Caco-2 (cell line): ENCODE measurements at regions of chr6 and their contacts with region 1.

Region 1: GRCh38 chr6:27146706-27147505 is 100.6 kb upstream of the PRSS16 start:
- DNase-seq: peak; percentile 89 to 93
- H3K4me3 ChIP-seq: peak overlapping the region; percentile 69
- H3K4me3 Mint-ChIP-seq: no peak overlapping the region
- H3K27ac Mint-ChIP-seq: no peak overlapping the region
- H3K4me1 ChIP-seq: no peaks in the 10 kb centered on the region
- H3K4me1 Mint-ChIP-seq: peaks cover 8% of the 10 kb centered on the region
- H3K27me3 ChIP-seq: no peaks in the 10 kb centered on the region
- H3K27me3 Mint-ChIP-seq: no peaks in the 10 kb centered on the region
- CTCF ChIP-seq: no peak

Region 2: DNA sequence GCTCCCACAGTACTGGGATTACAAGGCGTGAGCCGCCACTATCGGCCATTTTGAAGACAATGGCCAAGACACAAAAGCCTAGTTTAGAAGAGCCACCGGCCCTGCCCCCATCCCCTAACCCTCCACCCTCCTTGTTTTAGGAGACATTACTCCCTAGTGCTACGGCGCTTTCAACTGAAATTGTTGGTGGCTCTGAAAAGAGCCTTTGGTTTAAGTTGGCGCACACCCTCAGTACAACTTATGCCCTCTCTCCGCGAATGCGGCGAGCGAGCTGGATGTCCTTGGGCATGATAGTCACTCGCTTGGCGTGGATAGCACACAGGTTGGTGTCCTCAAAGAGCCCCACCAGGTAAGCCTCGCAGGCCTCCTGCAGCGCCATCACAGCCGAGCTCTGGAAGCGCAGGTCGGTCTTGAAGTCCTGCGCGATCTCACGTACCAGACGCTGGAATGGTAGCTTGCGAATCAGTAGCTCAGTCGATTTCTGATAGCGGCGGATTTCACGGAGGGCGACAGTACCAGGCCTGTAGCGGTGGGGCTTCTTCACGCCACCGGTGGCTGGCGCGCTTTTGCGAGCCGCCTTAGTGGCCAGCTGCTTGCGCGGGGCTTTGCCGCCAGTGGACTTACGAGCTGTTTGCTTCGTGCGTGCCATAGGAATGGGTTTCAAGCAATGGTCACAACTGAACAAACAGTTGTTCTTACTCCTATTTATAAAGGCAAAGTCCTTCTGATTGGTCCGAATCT is 896.8 kb before region 1 on chr6:
- CTCF ChIA-PET with region 1: no interaction called
- POLR2A ChIA-PET with region 1: interaction called, 13 read pairs
- intact Hi-C with region 1: no loop called
- DNase-seq: peak; percentile 81 to 84
- H3K4me3 ChIP-seq: peak overlapping the region; percentile 97
- H3K4me3 Mint-ChIP-seq: peak overlapping the region; percentile 71
- H3K27ac Mint-ChIP-seq: peak overlapping the region; percentile 71
- H3K4me1 ChIP-seq: peaks cover 10% of the 10 kb centered on the region; the same call in 1 of the 2 replicates
- H3K4me1 Mint-ChIP-seq: peaks cover 13% of the 10 kb centered on the region
- H3K27me3 ChIP-seq: no peaks in the 10 kb centered on the region
- H3K27me3 Mint-ChIP-seq: peaks cover 3% of the 10 kb centered on the region
- CTCF ChIP-seq: peak in 1 of 2 experiments; percentile 42

Region 3: DNA sequence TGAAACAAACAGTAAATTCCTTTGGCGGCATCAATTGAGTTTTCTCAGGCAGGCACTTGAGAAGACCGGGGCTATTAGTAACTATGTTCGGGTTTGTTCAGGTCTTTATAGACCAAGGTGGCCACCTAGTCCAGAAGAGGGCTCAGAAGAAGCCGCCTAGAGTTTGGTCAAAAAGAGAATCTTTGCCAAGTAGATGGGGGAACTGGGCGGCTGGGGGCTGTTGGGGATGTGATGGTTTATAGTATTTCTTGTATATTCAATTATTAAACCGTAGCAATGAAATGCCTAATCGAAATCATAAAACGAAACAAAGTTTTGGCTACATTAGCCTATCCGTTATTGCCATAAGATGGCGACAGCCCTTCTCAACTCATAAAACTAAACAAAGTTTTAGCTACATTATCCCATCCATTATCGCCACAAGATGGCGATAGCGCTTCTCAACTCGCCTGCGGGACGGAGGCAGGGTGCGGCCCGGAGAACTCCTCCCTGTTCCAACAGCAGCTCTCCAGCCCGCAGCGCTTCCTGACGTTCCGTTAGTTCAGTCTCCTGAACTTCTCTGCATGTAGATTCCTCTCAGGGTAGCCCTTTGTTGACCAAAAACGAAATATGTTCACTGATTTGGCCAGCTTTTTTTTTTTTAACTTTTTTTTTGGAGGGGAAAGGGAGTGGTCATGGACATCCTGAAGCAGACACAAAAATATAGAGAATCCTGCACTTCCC is 19.9 kb before region 1 on chr6:
- CTCF ChIA-PET with region 1: interaction called, 12 read pairs
- POLR2A ChIA-PET with region 1: interaction called, 221 read pairs
- intact Hi-C with region 1: loop called (anchors 1 kb)
- DNase-seq: peak; percentile 84 to 88
- H3K4me3 ChIP-seq: peak overlapping the region; percentile 22; the same call in 1 of the 2 replicates
- H3K4me3 Mint-ChIP-seq: peak overlapping the region; percentile 71
- H3K27ac Mint-ChIP-seq: no peak overlapping the region
- H3K4me1 ChIP-seq: no peaks in the 10 kb centered on the region
- H3K4me1 Mint-ChIP-seq: no peaks in the 10 kb centered on the region
- H3K27me3 ChIP-seq: no peaks in the 10 kb centered on the region
- H3K27me3 Mint-ChIP-seq: no peaks in the 10 kb centered on the region
- CTCF ChIP-seq: peak; percentile 75 to 80

Region 4: GRCh38 chr6:27753668-27754407 is 606.9 kb after region 1 on chr6:
- CTCF ChIA-PET with region 1: interaction called, 7 read pairs
- POLR2A ChIA-PET with region 1: interaction called, 17 read pairs
- intact Hi-C with region 1: no loop called
- DNase-seq: peak; percentile 81 to 90
- H3K4me3 ChIP-seq: peak overlapping the region; percentile 47
- H3K4me3 Mint-ChIP-seq: peak overlapping the region; percentile 74
- H3K27ac Mint-ChIP-seq: peak overlapping the region; percentile 83
- H3K4me1 ChIP-seq: no peaks in the 10 kb centered on the region
- H3K4me1 Mint-ChIP-seq: peaks cover 16% of the 10 kb centered on the region
- H3K27me3 ChIP-seq: no peaks in the 10 kb centered on the region
- H3K27me3 Mint-ChIP-seq: no peaks in the 10 kb centered on the region
- CTCF ChIP-seq: peak in 1 of 2 experiments; percentile 13

Region 5: GRCh38 chr6:27864906-27865849 is 718.3 kb after region 1 on chr6:
- CTCF ChIA-PET with region 1: no interaction called
- POLR2A ChIA-PET with region 1: interaction called, 12 read pairs
- intact Hi-C with region 1: loop called (anchors 1 kb)
- DNase-seq: peak; percentile 85 to 89
- H3K4me3 ChIP-seq: peak overlapping the region; percentile 49
- H3K4me3 Mint-ChIP-seq: peak overlapping the region; percentile 76
- H3K27ac Mint-ChIP-seq: peak overlapping the region; percentile 99
- H3K4me1 ChIP-seq: 0 out of 2 replicates have a peak, but pooled peaks cover 4% of the 10 kb centered on the region
- H3K4me1 Mint-ChIP-seq: peaks cover 12% of the 10 kb centered on the region
- H3K27me3 ChIP-seq: no peaks in the 10 kb centered on the region
- H3K27me3 Mint-ChIP-seq: peaks cover 9% of the 10 kb centered on the region
- CTCF ChIP-seq: no peak